ENCODE measurements at regions of chr18 and their contacts with region 1.

Region 1: GRCh38 chr18:63444567-63444966 is 22.3 kb upstream of the VPS4B start:
- DNase-seq: no peak
- ATAC-seq: peak; percentile 72
- H3K4me3 ChIP-seq: no peak overlapping the region
- H3K27ac ChIP-seq: peak overlapping the region in 1 of 2 donors; percentile 81
- H3K4me1 ChIP-seq: peaks cover 0 to 16% of the 10 kb centered on the region in 2 donors
- H3K27me3 ChIP-seq: no peaks in the 10 kb centered on the region
- CTCF ChIP-seq: no peak

Region 2: GRCh38 chr18:63016270-63016669 is 428.3 kb before region 1 on chr18:
- intact Hi-C with region 1: loop called in 1 of 2 experiments (anchors 10 kb)
- DNase-seq: peak in 2 of 4 donors; percentile 45 to 74
- ATAC-seq: peak; percentile 82
- H3K4me3 ChIP-seq: no peak overlapping the region
- H3K27ac ChIP-seq: no peak overlapping the region
- H3K4me1 ChIP-seq: no peaks in the 10 kb centered on the region
- H3K27me3 ChIP-seq: peaks cover 0 to 9% of the 10 kb centered on the region in 2 donors
- CTCF ChIP-seq: peak; percentile 70 to 80